Endothelial cell of umbilical vein (primary cell): ENCODE measurements at regions of chr1 and their contacts with region 1.

Region 1: GRCh38 chr1:80542231-80542630 is 1258.5 kb upstream of the ADGRL2 start:
- DNase-seq: no peak
- H3K4me3 ChIP-seq: no peak overlapping the region
- H3K27ac ChIP-seq: no peak overlapping the region
- H3K4me1 ChIP-seq: no peaks in the 10 kb centered on the region
- H3K27me3 ChIP-seq: no peaks in the 10 kb centered on the region
- CTCF ChIP-seq: no peak
- POLR2A ChIP-seq: no peak

Region 2: GRCh38 chr1:80218112-80218511 is 324.1 kb before region 1 on chr1:
- CTCF ChIA-PET with region 1: no interaction called
- POLR2A ChIA-PET with region 1: no interaction called
- dilution Hi-C with region 1: no loop called
- intact Hi-C with region 1: loop called (anchors 5 kb)
- DNase-seq: peak; percentile 51
- H3K4me3 ChIP-seq: no peak overlapping the region
- H3K27ac ChIP-seq: no peak overlapping the region
- H3K4me1 ChIP-seq: no peaks in the 10 kb centered on the region
- H3K27me3 ChIP-seq: no peaks in the 10 kb centered on the region
- CTCF ChIP-seq: peak; percentile 30 to 43
- POLR2A ChIP-seq: no peak

Region 3: DNA sequence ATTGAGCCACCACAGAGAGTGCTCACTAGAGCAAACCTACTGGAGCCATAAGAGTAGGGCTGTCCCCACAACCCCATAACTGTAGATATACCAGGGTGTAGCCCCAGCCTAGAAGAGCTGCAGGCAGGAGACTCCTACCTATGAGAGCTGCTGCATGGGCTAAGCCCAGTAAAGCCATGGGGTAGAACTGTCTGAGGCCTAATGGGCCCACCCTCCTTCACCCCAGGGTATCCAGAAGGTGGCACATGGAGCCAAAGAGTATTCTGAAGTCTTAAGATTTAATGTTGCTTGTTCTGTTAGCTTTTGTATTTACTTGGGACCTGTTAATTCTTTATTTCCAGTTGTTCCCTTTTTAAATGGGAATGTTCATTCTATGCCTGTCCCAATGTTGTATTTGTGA is 64.8 kb after region 1 on chr1:
- CTCF ChIA-PET with region 1: no interaction called
- POLR2A ChIA-PET with region 1: no interaction called
- dilution Hi-C with region 1: no loop called
- intact Hi-C with region 1: no loop called
- DNase-seq: no peak
- H3K4me3 ChIP-seq: no peak overlapping the region
- H3K27ac ChIP-seq: no peak overlapping the region
- H3K4me1 ChIP-seq: no peaks in the 10 kb centered on the region
- H3K27me3 ChIP-seq: no peaks in the 10 kb centered on the region
- CTCF ChIP-seq: no peak
- POLR2A ChIP-seq: no peak